Activated CD8-positive, alpha-beta T cell treated with anti-CD3 and anti-CD28 coated beads for 36 hours (primary cell): ENCODE measurements at regions of chr12 and their contacts with region 1.

Region 1: GRCh38 chr12:116559162-116559935 is at the start of gene MAP1LC3B2:
- DNase-seq: peak; percentile 93
- ATAC-seq: peak; percentile 90
- H3K4me3 Mint-ChIP-seq: peak within 1 kb of the TSS; percentile 67
- H3K27ac Mint-ChIP-seq: peak within 1 kb of the TSS; percentile 97
- H3K4me1 Mint-ChIP-seq: peaks cover 33% of the 10 kb centered on the region
- H3K27me3 Mint-ChIP-seq: no peaks in the 10 kb centered on the region
- CTCF ChIP-seq: no peak
- total RNA-seq, gene MAP1LC3B2: 1.9 to 3.1 TPM

Region 2: DNA sequence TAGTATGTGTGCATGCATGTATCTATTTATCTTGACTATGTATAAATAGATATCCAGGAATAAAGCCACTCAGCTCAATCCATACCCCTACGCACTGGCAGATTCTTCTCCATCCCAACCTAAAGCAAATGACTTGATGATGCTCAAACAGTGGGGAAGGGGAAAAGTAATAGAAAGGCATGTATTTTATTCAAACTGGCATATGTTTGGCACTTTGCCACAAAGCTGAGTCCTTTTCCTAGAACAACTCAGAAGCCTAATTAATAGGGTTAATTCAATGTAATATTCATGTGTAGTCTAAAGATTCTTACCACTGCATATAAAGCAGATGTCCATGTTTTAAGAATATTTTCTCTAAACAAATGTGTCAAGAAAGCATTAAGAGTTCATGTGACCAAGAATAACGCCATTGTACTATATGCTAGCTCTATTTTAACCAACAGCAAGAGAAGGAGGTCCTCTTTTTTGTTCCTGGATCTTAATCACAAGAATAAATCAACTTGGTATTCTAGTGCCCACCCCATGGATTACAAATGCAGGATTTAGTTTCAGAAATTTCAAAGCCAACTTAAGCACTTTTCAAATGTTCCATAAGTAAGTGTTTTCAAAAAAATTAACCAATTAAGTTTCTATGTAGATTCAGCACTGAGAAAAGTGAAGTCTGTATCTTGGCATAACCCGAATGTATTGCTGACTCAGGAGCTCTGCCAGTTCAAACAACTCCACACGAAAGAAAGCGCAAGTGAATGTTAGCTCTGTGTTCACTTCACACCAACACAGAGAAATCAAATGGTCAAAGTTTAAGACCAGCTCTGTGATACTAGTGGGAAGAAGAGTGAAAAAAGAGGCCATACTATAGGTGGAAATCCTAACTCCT is 515.5 kb before region 1 on chr12:
- CTCF ChIA-PET with region 1: no interaction called
- POLR2A ChIA-PET with region 1: no interaction called
- intact Hi-C with region 1: no loop called
- DNase-seq: no peak
- ATAC-seq: no peak
- H3K4me3 Mint-ChIP-seq: no peak overlapping the region
- H3K27ac Mint-ChIP-seq: no peak overlapping the region
- H3K4me1 Mint-ChIP-seq: peaks cover 30% of the 10 kb centered on the region
- H3K27me3 Mint-ChIP-seq: no peaks in the 10 kb centered on the region
- CTCF ChIP-seq: no peak

Region 3: GRCh38 chr12:116533343-116534251 is 25.8 kb before region 1 on chr12:
- CTCF ChIA-PET with region 1: interaction called, 6 read pairs
- POLR2A ChIA-PET with region 1: interaction called, 10 read pairs
- intact Hi-C with region 1: no loop called
- DNase-seq: peak; percentile 86
- ATAC-seq: peak; percentile 96
- H3K4me3 Mint-ChIP-seq: peak overlapping the region; percentile 68
- H3K27ac Mint-ChIP-seq: no peak overlapping the region
- H3K4me1 Mint-ChIP-seq: peaks cover 32% of the 10 kb centered on the region
- H3K27me3 Mint-ChIP-seq: peaks cover 3% of the 10 kb centered on the region
- CTCF ChIP-seq: no peak

Region 4: DNA sequence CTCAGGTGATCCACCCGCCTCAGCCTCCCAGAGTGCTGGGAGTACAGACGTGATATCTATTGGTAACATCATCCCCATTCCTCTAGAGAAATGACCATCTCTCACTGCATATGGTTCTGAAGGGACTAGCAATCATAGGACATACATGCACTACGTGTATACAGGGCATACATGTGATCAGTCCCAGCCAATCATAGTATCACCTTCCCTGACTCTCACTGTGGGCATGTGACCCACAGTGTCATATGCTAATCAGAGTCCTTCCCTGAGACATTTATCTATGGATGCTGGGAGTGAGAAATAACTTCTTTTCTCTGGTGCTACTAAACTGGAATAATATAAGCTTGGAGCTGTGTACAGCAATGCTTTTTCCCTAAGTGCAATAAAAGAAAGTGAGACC is 339.3 kb after region 1 on chr12:
- CTCF ChIA-PET with region 1: no interaction called
- POLR2A ChIA-PET with region 1: no interaction called
- intact Hi-C with region 1: no loop called
- DNase-seq: no peak
- ATAC-seq: no peak
- H3K4me3 Mint-ChIP-seq: no peak overlapping the region
- H3K27ac Mint-ChIP-seq: no peak overlapping the region
- H3K4me1 Mint-ChIP-seq: no peaks in the 10 kb centered on the region
- H3K27me3 Mint-ChIP-seq: peaks cover 3% of the 10 kb centered on the region
- CTCF ChIP-seq: no peak